Left ventricle myocardium inferior (tissue), 1 donor: ENCODE measurements at regions of chr6 and their contacts with region 1.

Region 1: GRCh38 chr6:157221007-157221816 is 102.1 kb downstream of the TMEM242 start:
- DNase-seq: peak; percentile 84
- H3K4me3 ChIP-seq: peak overlapping the region; percentile 59
- H3K27ac ChIP-seq: no peak overlapping the region
- H3K4me1 ChIP-seq: peaks cover 18% of the 10 kb centered on the region
- H3K27me3 ChIP-seq: no peaks in the 10 kb centered on the region
- CTCF ChIP-seq: peak; percentile 41

Region 2: GRCh38 chr6:157274471-157275226 is 53.4 kb after region 1 on chr6:
- intact Hi-C with region 1: loop called (anchors 10 kb)
- DNase-seq: peak; percentile 74
- H3K4me3 ChIP-seq: peak overlapping the region; percentile 80
- H3K27ac ChIP-seq: peak overlapping the region; percentile 90
- H3K4me1 ChIP-seq: peaks cover 24% of the 10 kb centered on the region
- H3K27me3 ChIP-seq: no peaks in the 10 kb centered on the region
- CTCF ChIP-seq: peak; percentile 93